Esophagus squamous epithelium (tissue), 5 donors: ENCODE measurements at regions of chr14 and their contacts with region 1.

Region 1: GRCh38 chr14:80560800-80561657 is 349.7 kb upstream of the DIO2 start:
- DNase-seq: no peak
- H3K4me3 ChIP-seq: no peak overlapping the region
- H3K27ac ChIP-seq: no peak overlapping the region
- H3K4me1 ChIP-seq: no peaks in the 10 kb centered on the region
- H3K27me3 ChIP-seq: no peaks in the 10 kb centered on the region
- CTCF ChIP-seq: no peak
- POLR2A ChIP-seq: no peak

Region 2: DNA sequence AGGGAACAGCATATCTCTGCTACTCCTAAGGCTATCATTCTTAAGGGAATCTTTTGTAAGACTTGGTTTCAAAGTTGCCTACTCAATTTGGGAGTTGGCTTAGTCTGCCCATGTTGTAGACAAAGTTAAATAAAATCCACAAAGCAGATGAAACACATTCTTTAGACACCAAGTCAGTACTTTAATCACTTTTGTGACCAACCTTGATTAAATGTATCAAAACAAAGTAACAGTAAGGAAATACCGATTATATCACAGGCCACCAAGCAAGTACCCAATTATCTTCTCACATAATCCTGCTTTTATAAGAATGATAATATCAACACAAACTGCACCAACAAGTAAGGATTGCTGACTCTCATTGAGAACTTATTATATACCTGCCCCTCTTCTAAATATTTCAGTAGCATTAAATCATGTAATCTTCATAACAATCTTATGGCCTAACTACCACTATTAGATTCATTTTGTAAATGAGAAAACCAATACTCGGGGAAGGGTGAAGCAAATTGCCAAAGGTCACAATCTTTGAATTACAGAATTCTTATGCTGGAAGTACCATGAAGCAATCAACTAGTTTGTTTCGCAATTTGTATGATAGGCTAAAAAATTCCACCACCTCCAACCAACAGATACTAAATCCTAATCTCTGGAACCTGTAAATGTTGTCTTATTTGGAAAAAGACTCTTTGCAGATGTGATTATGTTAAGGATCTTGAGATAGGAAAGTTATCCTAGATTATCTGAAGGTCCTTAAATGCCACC is 337.2 kb before region 1 on chr14:
- intact Hi-C with region 1: loop called (anchors 10 kb)
- DNase-seq: no peak
- H3K4me3 ChIP-seq: no peak overlapping the region
- H3K27ac ChIP-seq: no peak overlapping the region
- H3K4me1 ChIP-seq: no peaks in the 10 kb centered on the region
- H3K27me3 ChIP-seq: no peaks in the 10 kb centered on the region
- CTCF ChIP-seq: no peak
- POLR2A ChIP-seq: no peak

Region 3: GRCh38 chr14:80304238-80304732 is 256.7 kb before region 1 on chr14:
- intact Hi-C with region 1: no loop called
- DNase-seq: no peak
- H3K4me3 ChIP-seq: no peak overlapping the region
- H3K27ac ChIP-seq: peak overlapping the region in 2 of 4 donors; percentile 9 to 28
- H3K4me1 ChIP-seq: no peaks in the 10 kb centered on the region
- H3K27me3 ChIP-seq: no peaks in the 10 kb centered on the region
- CTCF ChIP-seq: no peak
- POLR2A ChIP-seq: no peak

Region 4: GRCh38 chr14:81193924-81194633 is 633.0 kb after region 1 on chr14:
- intact Hi-C with region 1: no loop called
- DNase-seq: no peak
- H3K4me3 ChIP-seq: no peak overlapping the region
- H3K27ac ChIP-seq: no peak overlapping the region
- H3K4me1 ChIP-seq: no peaks in the 10 kb centered on the region
- H3K27me3 ChIP-seq: no peaks in the 10 kb centered on the region
- CTCF ChIP-seq: no peak
- POLR2A ChIP-seq: no peak